ENCODE measurements at regions of chr6 and their contacts with region 1.

Region 1: GRCh38 chr6:15409301-15410125 is 163.6 kb downstream of the JARID2 start:
- DNase-seq: no peak
- CTCF ChIP-seq: no peak

Region 2: DNA sequence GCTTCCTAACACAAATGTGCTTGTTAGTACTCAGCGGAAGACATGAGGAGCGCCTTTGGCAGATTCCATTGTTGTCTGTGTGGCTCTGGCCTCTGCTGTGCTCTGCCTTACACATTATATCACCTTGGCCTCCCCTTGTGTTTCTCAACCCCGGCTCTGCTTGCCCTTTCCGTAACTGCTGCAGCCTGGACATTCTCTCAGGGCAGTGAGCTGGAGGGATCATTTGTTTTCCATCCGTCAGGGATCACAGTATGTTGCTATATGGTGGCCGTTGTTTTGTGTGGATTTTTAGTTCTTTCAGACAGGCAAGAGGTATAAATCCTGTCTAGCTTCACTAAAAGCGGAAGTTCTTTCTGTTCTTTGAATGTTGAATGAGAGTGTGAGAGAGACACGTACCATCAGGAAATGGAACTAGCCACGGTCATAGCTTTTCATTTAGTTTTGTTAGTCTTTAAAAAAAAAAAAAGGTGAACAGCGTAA is 11.5 kb after region 1 on chr6:
- CTCF ChIA-PET with region 1: interaction called, 23 read pairs
- POLR2A ChIA-PET with region 1: no interaction called
- DNase-seq: peak; percentile 69
- CTCF ChIP-seq: no peak

Measured in GM10248 (cell line).